ENCODE measurements at regions of chr7 and their contacts with region 1.

Region 1: GRCh38 chr7:26090927-26091519 is 61.0 kb upstream of the NFE2L3 start:
- DNase-seq: no peak
- H3K4me3 Mint-ChIP-seq: no peak overlapping the region
- H3K27ac Mint-ChIP-seq: no peak overlapping the region
- H3K4me1 Mint-ChIP-seq: peaks cover 14% of the 10 kb centered on the region
- H3K27me3 Mint-ChIP-seq: no peaks in the 10 kb centered on the region

Region 2: GRCh38 chr7:25881317-25882037 is 209.5 kb before region 1 on chr7:
- CTCF ChIA-PET with region 1: no interaction called
- POLR2A ChIA-PET with region 1: no interaction called
- intact Hi-C with region 1: no loop called
- DNase-seq: no peak
- H3K4me3 Mint-ChIP-seq: no peak overlapping the region
- H3K27ac Mint-ChIP-seq: no peak overlapping the region
- H3K4me1 Mint-ChIP-seq: no peaks in the 10 kb centered on the region
- H3K27me3 Mint-ChIP-seq: peaks cover 20% of the 10 kb centered on the region

Region 3: DNA sequence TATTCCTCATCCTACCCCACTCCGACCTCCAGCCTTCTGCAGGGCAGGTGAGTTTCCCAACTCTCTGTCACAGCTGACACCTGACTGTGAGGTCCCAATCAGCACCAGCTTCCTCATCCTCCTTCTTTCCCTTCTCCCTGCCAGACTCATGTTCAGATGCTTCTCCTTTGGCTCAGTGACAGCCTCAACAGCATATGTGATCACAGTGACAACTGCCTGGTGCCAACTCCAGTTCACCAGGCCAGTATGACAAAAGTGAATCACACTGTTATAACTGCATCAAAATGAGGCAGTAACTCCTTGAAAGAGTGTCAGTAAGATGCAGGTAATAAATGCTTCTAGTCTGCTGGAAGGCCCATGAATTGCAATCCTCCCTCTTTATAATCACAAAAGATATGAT is 14.2 kb after region 1 on chr7:
- CTCF ChIA-PET with region 1: interaction called, 13 read pairs
- POLR2A ChIA-PET with region 1: no interaction called
- intact Hi-C with region 1: loop called (anchors 1 kb)
- DNase-seq: no peak
- H3K4me3 Mint-ChIP-seq: no peak overlapping the region
- H3K27ac Mint-ChIP-seq: no peak overlapping the region
- H3K4me1 Mint-ChIP-seq: peaks cover 15% of the 10 kb centered on the region
- H3K27me3 Mint-ChIP-seq: no peaks in the 10 kb centered on the region

Region 4: GRCh38 chr7:26167301-26167934 is 76.4 kb after region 1 on chr7:
- CTCF ChIA-PET with region 1: interaction called, 18 read pairs
- POLR2A ChIA-PET with region 1: no interaction called
- intact Hi-C with region 1: loop called (anchors 2 kb)
- DNase-seq: peak; percentile 65
- H3K4me3 Mint-ChIP-seq: peak overlapping the region; percentile 11
- H3K27ac Mint-ChIP-seq: peak overlapping the region; percentile 94
- H3K4me1 Mint-ChIP-seq: peaks cover 48% of the 10 kb centered on the region
- H3K27me3 Mint-ChIP-seq: no peaks in the 10 kb centered on the region

Region 5: GRCh38 chr7:26187380-26188205 is 96.6 kb after region 1 on chr7:
- CTCF ChIA-PET with region 1: interaction called, 35 read pairs
- POLR2A ChIA-PET with region 1: interaction called, 9 read pairs
- intact Hi-C with region 1: no loop called
- DNase-seq: no peak
- H3K4me3 Mint-ChIP-seq: peak overlapping the region; percentile 10
- H3K27ac Mint-ChIP-seq: peak overlapping the region; percentile 81
- H3K4me1 Mint-ChIP-seq: peaks cover 70% of the 10 kb centered on the region
- H3K27me3 Mint-ChIP-seq: no peaks in the 10 kb centered on the region

Region 6: GRCh38 chr7:26284995-26285632 is 194.1 kb after region 1 on chr7:
- CTCF ChIA-PET with region 1: interaction called, 12 read pairs
- POLR2A ChIA-PET with region 1: no interaction called
- intact Hi-C with region 1: loop called (anchors 1 kb)
- DNase-seq: peak; percentile 25
- H3K4me3 Mint-ChIP-seq: no peak overlapping the region
- H3K27ac Mint-ChIP-seq: no peak overlapping the region
- H3K4me1 Mint-ChIP-seq: peaks cover 10% of the 10 kb centered on the region
- H3K27me3 Mint-ChIP-seq: no peaks in the 10 kb centered on the region

Region 7: GRCh38 chr7:26365077-26365900 is 274.3 kb after region 1 on chr7:
- CTCF ChIA-PET with region 1: interaction called, 100 read pairs
- POLR2A ChIA-PET with region 1: no interaction called
- intact Hi-C with region 1: loop called (anchors 1 kb)
- DNase-seq: peak; percentile 51
- H3K4me3 Mint-ChIP-seq: no peak overlapping the region
- H3K27ac Mint-ChIP-seq: peak overlapping the region; percentile 31
- H3K4me1 Mint-ChIP-seq: peaks cover 12% of the 10 kb centered on the region
- H3K27me3 Mint-ChIP-seq: no peaks in the 10 kb centered on the region